Activated naive CD4-positive, alpha-beta T cell treated with anti-CD3 and anti-CD28 coated beads, Interleukin-2, amount 10 ng/mL, durations not matched to agents 7 days and 5 days (primary cell): ENCODE measurements at regions of chrX and their contacts with region 1.

Region 1: DNA sequence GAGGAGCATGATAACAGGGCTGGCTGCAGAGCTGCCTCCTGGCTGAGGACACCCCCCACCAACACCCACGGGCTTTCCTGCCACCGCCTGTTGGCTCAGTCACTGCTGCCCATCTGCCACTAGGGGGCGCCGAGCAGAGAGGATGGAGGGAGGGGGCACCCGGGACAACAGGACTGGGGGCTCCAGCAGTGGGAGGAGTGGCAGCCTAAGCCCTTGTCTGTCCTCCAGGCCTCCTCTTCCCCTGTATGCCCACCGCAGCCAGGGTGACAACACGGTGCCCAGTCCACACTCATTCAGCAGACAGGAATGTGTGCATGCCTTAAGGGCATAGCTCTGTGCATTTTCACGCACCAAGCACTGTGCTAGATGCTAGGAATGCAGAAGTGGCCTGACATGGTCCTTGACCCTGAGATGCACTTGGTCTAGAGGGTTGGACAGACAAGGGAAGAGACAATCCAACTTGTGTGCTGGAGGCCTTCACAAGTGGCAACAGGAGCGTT is 149.9 kb downstream of the AMMECR1 start:
- DNase-seq: peak; percentile 52
- H3K4me3 Mint-ChIP-seq: no peak overlapping the region
- H3K27ac Mint-ChIP-seq: no peak overlapping the region
- H3K4me1 Mint-ChIP-seq: no peaks in the 10 kb centered on the region
- H3K27me3 Mint-ChIP-seq: no peaks in the 10 kb centered on the region

Region 2: GRCh38 chrX:110046001-110046400 is 122.0 kb before region 1 on chrX:
- CTCF ChIA-PET with region 1: no interaction called
- DNase-seq: no peak
- H3K4me3 Mint-ChIP-seq: no peak overlapping the region
- H3K27ac Mint-ChIP-seq: no peak overlapping the region
- H3K4me1 Mint-ChIP-seq: peaks cover 9% of the 10 kb centered on the region
- H3K27me3 Mint-ChIP-seq: no peaks in the 10 kb centered on the region

Region 3: DNA sequence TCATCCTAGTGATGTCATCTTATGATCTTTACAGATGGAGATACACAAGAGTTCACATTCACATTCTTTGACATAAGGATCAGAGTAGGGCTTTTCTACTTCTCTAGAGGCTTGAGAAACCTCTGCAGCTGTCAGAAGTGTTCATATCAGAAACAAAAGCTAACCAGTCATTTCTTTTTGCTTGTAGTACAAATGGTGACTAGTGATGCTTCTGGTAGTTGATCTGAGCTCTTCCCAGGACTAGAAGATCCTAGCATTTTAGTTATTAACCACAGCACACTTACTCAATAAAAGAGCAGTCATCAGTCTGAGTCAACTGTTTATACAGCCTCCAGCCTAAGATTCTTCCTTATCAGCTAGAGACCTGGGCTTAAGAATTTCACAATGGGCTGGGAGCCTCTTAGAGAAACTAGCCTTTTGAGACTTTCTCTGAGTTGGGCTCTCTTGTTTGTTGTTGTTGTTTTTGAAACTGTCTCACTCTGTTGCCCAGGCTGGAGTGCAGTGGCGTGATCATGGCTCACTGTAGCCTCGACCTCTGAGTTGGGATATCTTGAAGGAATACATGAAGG is 81.0 kb before region 1 on chrX:
- CTCF ChIA-PET with region 1: no interaction called
- DNase-seq: no peak
- H3K4me3 Mint-ChIP-seq: no peak overlapping the region
- H3K27ac Mint-ChIP-seq: no peak overlapping the region
- H3K4me1 Mint-ChIP-seq: peaks cover 7% of the 10 kb centered on the region
- H3K27me3 Mint-ChIP-seq: no peaks in the 10 kb centered on the region

Region 4: GRCh38 chrX:110156167-110156754 is 11.7 kb before region 1 on chrX:
- CTCF ChIA-PET with region 1: interaction called, 10 read pairs
- DNase-seq: no peak
- H3K4me3 Mint-ChIP-seq: no peak overlapping the region
- H3K27ac Mint-ChIP-seq: no peak overlapping the region
- H3K4me1 Mint-ChIP-seq: peaks cover 13% of the 10 kb centered on the region
- H3K27me3 Mint-ChIP-seq: no peaks in the 10 kb centered on the region

Region 5: DNA sequence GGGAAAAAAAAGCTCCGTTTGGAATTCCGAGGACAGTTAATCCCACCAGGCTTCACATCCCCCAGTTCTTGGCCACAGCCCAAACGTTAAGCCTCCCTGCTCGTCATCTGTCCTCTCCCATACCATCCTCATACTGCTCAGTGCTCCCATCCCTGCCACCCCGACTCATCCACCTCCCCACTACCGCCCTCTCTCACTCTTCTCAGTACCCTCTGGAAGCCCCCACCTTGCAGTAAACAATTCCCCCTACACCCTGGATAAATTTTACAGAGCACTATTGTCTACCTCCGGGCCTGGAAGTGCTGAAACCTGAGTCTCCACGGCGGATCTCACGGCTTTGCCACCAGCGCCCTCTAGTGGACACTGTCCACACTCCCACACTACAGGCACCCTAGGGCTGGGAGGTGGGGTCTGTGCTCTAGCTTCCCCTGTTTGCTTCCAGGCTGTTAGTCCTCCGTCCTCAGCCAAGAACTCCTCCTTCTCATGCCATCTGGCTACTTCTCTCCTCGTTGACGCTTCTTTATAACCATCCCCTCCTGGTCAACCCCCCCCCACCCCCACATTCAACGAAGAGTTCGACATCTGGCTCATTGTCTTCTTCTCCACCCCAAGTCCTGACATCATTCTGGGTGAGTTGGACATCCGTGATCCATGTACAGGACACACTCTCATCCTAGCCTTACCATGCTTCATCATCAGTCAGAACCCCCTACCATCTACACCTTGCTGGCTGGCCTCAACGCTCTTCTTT is 245.1 kb after region 1 on chrX:
- CTCF ChIA-PET with region 1: interaction called, 409 read pairs
- DNase-seq: peak; percentile 74
- H3K4me3 Mint-ChIP-seq: no peak overlapping the region
- H3K27ac Mint-ChIP-seq: no peak overlapping the region
- H3K4me1 Mint-ChIP-seq: no peaks in the 10 kb centered on the region
- H3K27me3 Mint-ChIP-seq: peaks cover 4% of the 10 kb centered on the region